Activated naive CD4-positive, alpha-beta T cell treated with anti-CD3 and anti-CD28 coated beads for 36 hours (primary cell): ENCODE measurements at regions of chr1 and their contacts with region 1.

Region 1: DNA sequence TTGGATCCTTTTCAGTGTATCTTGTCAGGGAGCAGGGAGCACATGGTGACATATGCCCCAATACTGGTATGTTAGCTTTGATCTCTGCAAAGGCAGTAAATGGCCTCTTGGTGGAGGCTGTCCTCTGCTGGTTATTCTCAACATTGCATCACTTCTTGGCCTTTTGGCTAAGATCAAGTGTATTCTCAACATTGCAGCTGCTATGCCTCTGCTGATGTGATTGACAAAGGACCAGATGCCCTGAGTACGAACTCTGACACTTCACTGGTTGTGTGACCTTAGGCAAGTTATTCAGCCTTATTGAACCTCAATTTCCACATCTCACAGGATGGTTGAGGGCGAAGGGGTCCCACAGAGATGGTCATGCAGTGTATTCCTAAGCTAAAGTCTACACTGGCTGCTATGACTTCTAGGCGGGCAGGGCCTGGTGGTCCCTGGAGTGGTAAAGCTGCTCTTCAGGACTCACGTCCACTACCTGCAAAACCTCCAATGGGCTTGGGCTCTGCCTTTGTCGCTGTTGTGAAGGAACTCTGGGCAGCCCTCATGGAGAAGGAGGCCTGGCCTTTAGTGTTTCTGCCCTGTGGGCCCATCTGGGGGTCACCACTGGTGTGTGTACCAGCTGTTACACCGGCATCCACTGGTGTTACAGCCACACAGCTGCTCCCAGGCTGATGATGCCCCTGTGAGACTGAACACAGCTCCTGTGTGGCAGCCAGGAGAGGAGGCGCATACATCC is 64.8 kb downstream of the DNTTIP2 start:
- DNase-seq: peak; percentile 74
- H3K4me3 Mint-ChIP-seq: no peak overlapping the region
- H3K27ac Mint-ChIP-seq: no peak overlapping the region
- H3K4me1 Mint-ChIP-seq: peaks cover 19% of the 10 kb centered on the region
- H3K27me3 Mint-ChIP-seq: no peaks in the 10 kb centered on the region

Region 2: GRCh38 chr1:93304716-93305138 is 509.5 kb before region 1 on chr1:
- CTCF ChIA-PET with region 1: interaction called, 6 read pairs
- intact Hi-C with region 1: loop called (anchors 1 kb)
- DNase-seq: peak; percentile 67
- H3K4me3 Mint-ChIP-seq: no peak overlapping the region
- H3K27ac Mint-ChIP-seq: no peak overlapping the region
- H3K4me1 Mint-ChIP-seq: no peaks in the 10 kb centered on the region
- H3K27me3 Mint-ChIP-seq: no peaks in the 10 kb centered on the region

Region 3: GRCh38 chr1:93615582-93616150 is 198.6 kb before region 1 on chr1:
- CTCF ChIA-PET with region 1: interaction called, 11 read pairs
- intact Hi-C with region 1: no loop called
- DNase-seq: peak; percentile 76
- H3K4me3 Mint-ChIP-seq: no peak overlapping the region
- H3K27ac Mint-ChIP-seq: no peak overlapping the region
- H3K4me1 Mint-ChIP-seq: peaks cover 17% of the 10 kb centered on the region
- H3K27me3 Mint-ChIP-seq: peaks cover 3% of the 10 kb centered on the region

Region 4: DNA sequence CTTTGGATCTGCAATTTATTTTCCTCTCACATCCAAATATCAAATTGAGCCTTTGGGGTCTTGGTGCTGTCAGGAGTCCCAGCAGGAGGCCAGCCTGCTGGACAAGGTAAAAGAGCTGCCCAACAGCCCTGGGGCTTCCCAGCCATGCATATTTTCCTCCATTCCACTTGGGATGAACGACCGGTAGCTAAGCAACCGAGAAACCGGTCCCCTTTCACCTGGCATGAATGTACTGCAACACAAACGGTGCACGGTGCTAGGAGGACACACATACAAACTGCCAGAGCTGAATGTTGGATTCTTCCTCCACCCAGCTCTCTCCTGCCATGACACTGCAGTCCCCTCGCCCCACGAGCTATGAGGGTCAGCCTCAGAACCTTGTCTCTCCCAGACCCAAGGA is 175.2 kb before region 1 on chr1:
- CTCF ChIA-PET with region 1: interaction called, 188 read pairs
- intact Hi-C with region 1: no loop called
- DNase-seq: no peak
- H3K4me3 Mint-ChIP-seq: no peak overlapping the region
- H3K27ac Mint-ChIP-seq: no peak overlapping the region
- H3K4me1 Mint-ChIP-seq: peaks cover 6% of the 10 kb centered on the region
- H3K27me3 Mint-ChIP-seq: no peaks in the 10 kb centered on the region

Region 5: DNA sequence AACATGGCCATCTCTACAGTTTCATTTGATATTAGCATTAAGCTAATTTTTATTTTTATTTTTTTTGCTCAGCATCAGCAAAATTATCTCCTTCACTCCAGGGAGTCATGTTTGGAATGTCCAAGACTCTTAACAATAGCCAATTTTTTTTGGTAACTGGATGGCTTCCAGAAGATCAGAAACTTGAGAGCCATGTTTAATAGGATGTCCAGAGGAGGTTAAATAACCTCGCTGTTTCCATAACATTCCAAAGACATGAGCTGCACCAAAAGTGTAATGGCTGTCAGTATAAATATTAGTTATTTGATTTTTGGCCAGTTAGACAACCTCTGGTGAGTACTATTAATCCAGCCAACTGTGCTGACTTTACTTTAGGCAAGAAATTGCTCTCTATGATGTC is 15.9 kb before region 1 on chr1:
- CTCF ChIA-PET with region 1: no interaction called
- intact Hi-C with region 1: no loop called
- DNase-seq: no peak
- H3K4me3 Mint-ChIP-seq: no peak overlapping the region
- H3K27ac Mint-ChIP-seq: no peak overlapping the region
- H3K4me1 Mint-ChIP-seq: no peaks in the 10 kb centered on the region
- H3K27me3 Mint-ChIP-seq: peaks cover 4% of the 10 kb centered on the region

Region 6: DNA sequence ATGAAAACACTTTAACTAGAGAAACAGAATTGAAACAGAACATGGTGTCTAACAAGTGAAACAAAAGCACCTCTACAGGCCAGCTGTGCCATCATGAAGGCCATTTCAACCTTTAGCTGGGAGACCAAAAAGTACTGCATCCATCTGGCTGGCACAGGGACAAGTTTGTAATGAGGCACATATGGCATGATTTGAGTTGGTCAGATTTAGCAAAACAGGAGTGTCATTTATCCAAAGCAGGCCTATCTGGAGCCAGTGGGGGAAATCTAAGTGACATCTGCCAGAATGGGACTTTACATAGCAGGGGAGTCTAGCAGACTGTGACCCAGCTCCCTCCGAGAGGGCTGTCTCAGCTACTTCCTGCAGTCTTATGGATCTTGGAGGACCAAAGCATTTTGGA is 12.9 kb after region 1 on chr1:
- CTCF ChIA-PET with region 1: interaction called, 12 read pairs
- intact Hi-C with region 1: no loop called
- DNase-seq: no peak
- H3K4me3 Mint-ChIP-seq: no peak overlapping the region
- H3K27ac Mint-ChIP-seq: no peak overlapping the region
- H3K4me1 Mint-ChIP-seq: peaks cover 3% of the 10 kb centered on the region
- H3K27me3 Mint-ChIP-seq: no peaks in the 10 kb centered on the region

Region 7: GRCh38 chr1:94209425-94209824 is 395.2 kb after region 1 on chr1:
- CTCF ChIA-PET with region 1: no interaction called
- intact Hi-C with region 1: no loop called
- DNase-seq: no peak
- H3K4me3 Mint-ChIP-seq: no peak overlapping the region
- H3K27ac Mint-ChIP-seq: no peak overlapping the region
- H3K4me1 Mint-ChIP-seq: no peaks in the 10 kb centered on the region
- H3K27me3 Mint-ChIP-seq: peaks cover 3% of the 10 kb centered on the region